ENCODE measurements at regions of chr22 and their contacts with region 1.

Region 1: GRCh38 chr22:41256254-41256897 is 15.6 kb upstream of the CHADL start:
- DNase-seq: no peak
- H3K4me3 ChIP-seq: no peak overlapping the region
- H3K27ac ChIP-seq: no peak overlapping the region; the same call in 1 of the 2 replicates
- H3K4me1 ChIP-seq: peaks cover 0 to 4% (median under 1%) of the 10 kb centered on the region in 4 experiments; a peak in 2 of 7 replicates
- H3K27me3 ChIP-seq: no peaks in the 10 kb centered on the region
- CTCF ChIP-seq: no peak
- EP300 ChIP-seq: no peak
- POLR2A ChIP-seq: no peak
- RAD21 ChIP-seq: no peak

Region 2: DNA sequence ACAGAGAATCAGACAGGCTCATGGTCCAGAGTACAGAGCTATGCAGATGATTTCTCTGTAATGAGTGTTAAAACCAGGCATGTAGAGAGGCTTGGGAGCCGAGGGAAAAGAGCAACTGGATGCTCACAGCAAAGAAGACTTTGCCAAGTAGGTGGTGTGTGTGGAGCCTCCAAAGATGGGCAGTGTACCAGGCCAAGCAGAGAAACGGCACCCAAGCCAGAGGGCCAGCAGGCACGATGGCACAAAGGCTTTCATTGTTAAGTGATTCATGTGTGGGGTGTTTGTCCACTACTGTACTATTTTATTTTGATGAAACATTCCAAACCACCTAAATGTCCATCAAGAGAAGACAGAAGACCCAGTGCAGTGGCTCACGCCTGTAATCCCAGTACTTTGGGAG is 18.5 kb after region 1 on chr22:
- CTCF ChIA-PET with region 1: interaction called, 3 read pairs
- POLR2A ChIA-PET with region 1: interaction called, 28 read pairs
- DNase-seq: no peak
- H3K4me3 ChIP-seq: no peak overlapping the region
- H3K27ac ChIP-seq: no peak overlapping the region
- H3K4me1 ChIP-seq: no peaks in the 10 kb centered on the region
- H3K27me3 ChIP-seq: no peaks in the 10 kb centered on the region
- CTCF ChIP-seq: no peak
- EP300 ChIP-seq: no peak
- POLR2A ChIP-seq: no peak
- RAD21 ChIP-seq: no peak